ENCODE measurements at regions of chr1 and their contacts with region 1.

Region 1: DNA sequence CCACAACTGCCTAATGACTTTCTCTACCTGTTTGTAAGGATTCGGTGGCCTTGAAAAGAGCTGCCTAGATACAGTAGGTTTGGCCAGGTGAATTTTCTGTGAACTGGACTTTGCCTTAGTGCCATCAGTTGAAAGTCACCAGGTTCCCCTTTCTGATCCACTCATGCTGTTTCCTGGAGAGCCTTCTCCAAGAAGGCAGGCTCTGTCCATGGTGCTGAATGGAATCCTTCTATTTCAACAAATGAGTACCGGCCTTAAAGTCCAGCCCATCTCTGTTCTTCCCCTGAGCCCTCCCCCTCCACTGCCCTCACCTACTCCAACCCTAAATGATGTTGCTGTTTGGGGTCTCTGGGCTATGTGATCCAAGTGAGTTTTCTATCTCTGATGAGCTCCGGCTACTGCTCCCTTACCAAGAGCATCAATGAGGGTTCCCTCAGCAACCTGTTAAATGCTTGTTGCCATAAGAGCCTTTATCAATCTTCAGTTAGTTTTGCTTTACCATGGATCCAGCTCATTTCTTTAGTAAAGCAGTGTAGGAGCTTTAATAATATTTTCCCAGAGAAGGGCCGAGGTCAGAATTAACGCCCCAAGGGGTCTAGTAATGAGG is 500.4 kb downstream of the PTPRU start:
- DNase-seq: no peak
- ATAC-seq: no peak
- H3K4me3 ChIP-seq: no peak overlapping the region
- H3K4me3 Mint-ChIP-seq: no peak overlapping the region
- H3K27ac ChIP-seq: no peak overlapping the region
- H3K27ac Mint-ChIP-seq: no peak overlapping the region
- H3K4me1 ChIP-seq: no peaks in the 10 kb centered on the region
- H3K4me1 Mint-ChIP-seq: peaks cover 0 to 8% (median 0%) of the 10 kb centered on the region in 7 donors
- H3K27me3 ChIP-seq: no peaks in the 10 kb centered on the region
- H3K27me3 Mint-ChIP-seq: peaks cover 0 to 62% (median 35%) of the 10 kb centered on the region in 5 donors

Region 2: GRCh38 chr1:29555043-29555620 is 181.6 kb before region 1 on chr1:
- CTCF ChIA-PET with region 1: no interaction called
- POLR2A ChIA-PET with region 1: no interaction called
- intact Hi-C with region 1: loop called in 1 of 2 experiments (anchors 5 kb)
- DNase-seq: no peak
- ATAC-seq: no peak
- H3K4me3 ChIP-seq: no peak overlapping the region
- H3K4me3 Mint-ChIP-seq: no peak overlapping the region
- H3K27ac ChIP-seq: no peak overlapping the region
- H3K27ac Mint-ChIP-seq: peak overlapping the region in 1 of 9 donors; percentile 21
- H3K4me1 ChIP-seq: no peaks in the 10 kb centered on the region
- H3K4me1 Mint-ChIP-seq: peaks cover 0 to 3% (median 0%) of the 10 kb centered on the region in 7 donors
- H3K27me3 ChIP-seq: no peaks in the 10 kb centered on the region
- H3K27me3 Mint-ChIP-seq: peaks cover 0 to 16% (median 5%) of the 10 kb centered on the region in 5 donors

Region 3: DNA sequence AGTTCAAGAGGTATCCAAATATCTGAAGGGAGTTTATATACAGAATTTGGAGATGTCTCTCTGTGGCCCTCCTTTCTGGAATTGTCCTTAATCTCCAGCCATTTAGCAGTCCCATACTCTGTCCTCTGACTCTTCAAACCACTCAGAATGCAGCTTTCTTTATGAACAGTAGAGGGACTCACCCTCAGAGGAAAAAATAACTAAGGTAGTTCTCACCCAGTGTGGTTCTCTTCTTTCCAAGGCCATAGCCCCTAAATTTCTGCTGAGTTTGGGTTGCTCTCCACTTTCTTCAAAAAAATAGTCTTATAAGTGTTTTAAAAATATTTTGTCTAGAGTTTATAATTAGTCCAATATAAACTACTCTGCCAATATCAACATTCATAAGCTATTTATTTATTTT is 617.0 kb after region 1 on chr1:
- CTCF ChIA-PET with region 1: no interaction called
- POLR2A ChIA-PET with region 1: no interaction called
- intact Hi-C with region 1: no loop called
- DNase-seq: no peak
- ATAC-seq: no peak
- H3K4me3 ChIP-seq: no peak overlapping the region
- H3K4me3 Mint-ChIP-seq: no peak overlapping the region
- H3K27ac ChIP-seq: no peak overlapping the region
- H3K27ac Mint-ChIP-seq: no peak overlapping the region
- H3K4me1 ChIP-seq: no peaks in the 10 kb centered on the region
- H3K4me1 Mint-ChIP-seq: no peaks in the 10 kb centered on the region
- H3K27me3 ChIP-seq: peaks cover 0 to 3% of the 10 kb centered on the region in 2 donors
- H3K27me3 Mint-ChIP-seq: peaks cover 30 to 59% (median 49%) of the 10 kb centered on the region in 5 donors